Left cardiac atrium (tissue), 4 donors: ENCODE measurements at regions of chr3 and their contacts with region 1.

Region 1: GRCh38 chr3:4633078-4634004 is 140.2 kb downstream of the ITPR1 start:
- DNase-seq: no peak
- ATAC-seq: peak; percentile 75 to 76

Region 2: GRCh38 chr3:4466741-4467521 is 166.4 kb before region 1 on chr3 and contains the start of gene SUMF1:
- intact Hi-C with region 1: loop called in 1 of 2 experiments (anchors 10 kb)
- DNase-seq: peak; percentile 84
- ATAC-seq: peak; percentile 99
- total RNA-seq, gene SUMF1: 12.0 to 13.0 TPM

Region 3: DNA sequence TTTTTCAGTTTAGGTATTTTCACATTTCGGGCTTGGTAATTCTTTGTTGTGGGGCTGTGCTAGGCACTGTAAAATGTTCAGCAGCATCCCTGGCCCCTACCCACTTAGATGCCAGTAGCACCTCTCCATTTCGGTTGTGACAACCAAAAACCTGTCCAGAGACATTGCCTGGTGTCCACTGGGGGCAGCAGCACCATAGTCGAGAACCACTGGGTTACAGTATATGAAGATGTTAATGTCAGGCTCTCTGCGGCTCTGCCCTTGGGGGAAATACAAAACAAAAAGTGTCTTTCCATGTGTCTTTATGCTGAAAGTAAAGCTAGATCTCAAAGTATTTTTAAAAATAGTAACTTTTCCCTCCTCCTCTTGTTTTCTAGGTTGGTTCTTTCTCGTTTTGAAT is 37.0 kb after region 1 on chr3:
- intact Hi-C with region 1: no loop called
- DNase-seq: no peak
- ATAC-seq: no peak